Activated B cell treated with CpG ODN at 0.5 μM for 24 hours (primary cell): ENCODE measurements at regions of chr16 and their contacts with region 1.

Region 1: DNA sequence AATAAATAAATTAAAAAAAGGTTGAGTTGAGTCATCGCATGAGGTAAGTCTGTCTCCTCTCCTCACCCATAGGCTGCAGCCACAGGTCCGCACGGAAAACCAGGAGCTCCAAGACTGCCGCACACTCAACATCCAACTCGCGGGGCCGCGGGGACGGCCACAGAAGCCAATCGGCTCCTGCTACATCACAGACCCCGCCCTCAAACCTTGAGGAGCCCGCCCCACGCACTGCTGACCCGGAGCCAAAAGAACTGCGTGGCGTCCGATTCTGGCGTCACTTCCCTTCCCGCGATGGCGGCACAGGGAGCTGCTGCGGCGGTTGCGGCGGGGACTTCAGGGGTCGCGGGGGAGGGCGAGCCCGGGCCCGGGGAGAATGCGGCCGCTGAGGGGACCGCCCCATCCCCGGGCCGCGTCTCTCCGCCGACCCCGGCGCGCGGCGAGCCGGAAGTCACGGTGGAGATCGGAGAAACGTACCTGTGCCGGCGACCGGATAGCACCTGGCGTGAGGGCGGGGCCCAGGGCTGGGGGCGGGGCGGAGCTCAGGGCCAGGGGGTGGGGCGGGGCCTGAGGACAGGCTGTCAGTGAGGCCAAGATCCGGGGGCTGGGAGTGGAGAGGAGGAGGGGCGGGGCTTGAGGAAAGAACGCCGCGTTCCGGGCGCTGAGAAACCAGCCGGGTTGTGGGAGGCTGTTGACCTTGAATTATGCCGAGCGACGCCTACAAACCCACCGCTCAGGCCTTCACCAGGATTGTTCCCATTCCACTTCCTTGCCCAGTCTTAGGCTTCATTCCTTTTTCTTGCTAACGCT is at the start of gene KAT8:
- DNase-seq: peak; percentile 92
- ATAC-seq: peak; percentile 94
- H3K4me3 Mint-ChIP-seq: peak within 1 kb of the TSS; percentile 85
- H3K27ac Mint-ChIP-seq: peak within 1 kb of the TSS; percentile 85
- H3K4me1 Mint-ChIP-seq: peaks cover 22% of the 10 kb centered on the region
- H3K27me3 Mint-ChIP-seq: no peaks in the 10 kb centered on the region
- CTCF ChIP-seq: no peak
- total RNA-seq, gene KAT8: 82.1 and 93.7 TPM in 2 replicates

Region 2: GRCh38 chr16:30957456-30958174 is 160.0 kb before region 1 on chr16 and contains the start of gene SETD1A:
- CTCF ChIA-PET with region 1: interaction called, 3 read pairs
- POLR2A ChIA-PET with region 1: interaction called, 5 read pairs
- intact Hi-C with region 1: loop called (anchors 5 kb)
- DNase-seq: peak; percentile 89
- ATAC-seq: peak; percentile 87
- H3K4me3 Mint-ChIP-seq: peak within 1 kb of the TSS; percentile 95
- H3K27ac Mint-ChIP-seq: peak within 1 kb of the TSS; percentile 99
- H3K4me1 Mint-ChIP-seq: peaks cover 31% of the 10 kb centered on the region
- H3K27me3 Mint-ChIP-seq: no peaks in the 10 kb centered on the region
- CTCF ChIP-seq: no peak
- total RNA-seq, gene SETD1A: 29.6 and 32.8 TPM in 2 replicates

Region 3: GRCh38 chr16:31094424-31095120 is 23.0 kb before region 1 on chr16 and contains the start of gene VKORC1:
- CTCF ChIA-PET with region 1: interaction called, 3 read pairs
- POLR2A ChIA-PET with region 1: interaction called, 29 read pairs
- intact Hi-C with region 1: loop called (anchors 1 kb)
- DNase-seq: peak; percentile 77
- ATAC-seq: peak; percentile 88
- H3K4me3 Mint-ChIP-seq: peak within 1 kb of the TSS; percentile 95
- H3K27ac Mint-ChIP-seq: peak within 1 kb of the TSS; percentile 93
- H3K4me1 Mint-ChIP-seq: peaks cover 25% of the 10 kb centered on the region
- H3K27me3 Mint-ChIP-seq: no peaks in the 10 kb centered on the region
- CTCF ChIP-seq: no peak
- total RNA-seq, gene VKORC1: 38.7 and 41.9 TPM in 2 replicates

Region 4: DNA sequence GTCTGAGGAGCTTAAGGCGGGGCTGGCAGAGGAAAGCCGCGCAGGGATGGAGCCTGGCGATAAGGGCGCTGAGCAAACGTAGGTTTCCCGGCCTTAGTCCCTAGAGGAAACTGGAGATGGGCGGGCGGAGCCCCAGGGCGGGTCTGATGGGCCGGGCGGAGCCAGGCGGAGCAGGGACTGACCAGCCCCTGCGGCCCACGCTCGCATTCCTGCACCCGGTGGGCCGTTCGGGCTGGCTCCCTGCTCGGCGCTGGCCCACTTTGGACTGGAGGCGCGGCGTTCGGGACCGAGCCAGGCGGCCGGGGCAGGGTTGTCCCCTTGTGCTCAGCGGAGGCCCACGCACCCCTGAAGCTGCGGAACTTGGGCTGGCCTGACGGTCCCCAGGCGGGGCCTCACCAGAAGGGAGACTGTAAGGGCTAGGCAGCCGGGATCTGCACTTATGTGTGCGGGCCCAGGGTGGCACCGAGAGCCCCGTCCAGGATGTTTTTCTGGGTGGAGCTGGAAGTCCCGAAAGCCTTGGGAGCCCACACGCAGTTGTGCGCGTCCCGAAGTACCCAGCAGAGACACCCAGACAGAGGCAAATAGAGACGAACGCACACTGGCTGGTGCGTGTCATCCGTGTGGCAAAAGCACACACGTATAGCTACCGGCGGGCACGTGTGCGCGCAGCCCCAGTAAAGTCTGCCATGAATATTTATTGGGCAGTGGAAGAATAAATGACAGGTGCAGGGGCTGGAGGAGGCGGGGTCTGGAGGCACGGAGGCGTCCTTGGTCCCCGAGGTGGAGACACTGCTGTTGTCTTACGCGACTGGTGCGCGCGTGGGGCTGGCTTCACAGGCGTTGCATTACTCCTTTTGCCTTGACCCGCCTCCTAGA is 97.9 kb after region 1 on chr16:
- CTCF ChIA-PET with region 1: no interaction called
- POLR2A ChIA-PET with region 1: interaction called, 12 read pairs
- intact Hi-C with region 1: no loop called
- DNase-seq: peak; percentile 37
- ATAC-seq: peak; percentile 63
- H3K4me3 Mint-ChIP-seq: peak overlapping the region; percentile 83
- H3K27ac Mint-ChIP-seq: no peak overlapping the region
- H3K4me1 Mint-ChIP-seq: peaks cover 48% of the 10 kb centered on the region
- H3K27me3 Mint-ChIP-seq: peaks cover 19% of the 10 kb centered on the region
- CTCF ChIP-seq: no peak